Body of pancreas (tissue), 4 donors: ENCODE measurements at regions of chr3 and their contacts with region 1.

Region 1: GRCh38 chr3:8970971-8971589 is 7.8 kb upstream of the RAD18 start:
- DNase-seq: peak; percentile 71 to 75 (median 73)
- ATAC-seq: peak; percentile 77
- H3K4me3 ChIP-seq: no peak overlapping the region
- H3K27ac ChIP-seq: no peak overlapping the region
- H3K4me1 ChIP-seq: no peaks in the 10 kb centered on the region
- H3K27me3 ChIP-seq: no peaks in the 10 kb centered on the region
- CTCF ChIP-seq: peak; percentile 94 to 100 (median 96)
- POLR2A ChIP-seq: no peak

Region 2: GRCh38 chr3:9074079-9074478 is 103.0 kb after region 1 on chr3:
- intact Hi-C with region 1: loop called (anchors 5 kb)
- DNase-seq: no peak
- ATAC-seq: no peak
- H3K4me3 ChIP-seq: no peak overlapping the region
- H3K27ac ChIP-seq: no peak overlapping the region
- H3K4me1 ChIP-seq: no peaks in the 10 kb centered on the region
- H3K27me3 ChIP-seq: no peaks in the 10 kb centered on the region
- CTCF ChIP-seq: no peak
- POLR2A ChIP-seq: no peak

Region 3: GRCh38 chr3:9302425-9303181 is 331.5 kb after region 1 on chr3:
- intact Hi-C with region 1: loop called (anchors 5 kb)
- DNase-seq: peak; percentile 77 to 82 (median 78)
- ATAC-seq: peak; percentile 90
- H3K4me3 ChIP-seq: no peak overlapping the region
- H3K27ac ChIP-seq: no peak overlapping the region
- H3K4me1 ChIP-seq: peaks cover 7% of the 10 kb centered on the region
- H3K27me3 ChIP-seq: no peaks in the 10 kb centered on the region
- CTCF ChIP-seq: peak; percentile 79 to 91 (median 86)
- POLR2A ChIP-seq: no peak